Pancreas (tissue), 10 donors: ENCODE measurements at regions of chr7 and their contacts with region 1.

Region 1: GRCh38 chr7:145431834-145432233 is 596.0 kb upstream of the TPK1 start:
- DNase-seq: no peak
- ATAC-seq: no peak
- H3K4me3 ChIP-seq: no peak overlapping the region
- H3K27ac ChIP-seq: no peak overlapping the region
- H3K4me1 ChIP-seq: no peaks in the 10 kb centered on the region
- H3K27me3 ChIP-seq: no peaks in the 10 kb centered on the region
- CTCF ChIP-seq: no peak

Region 2: DNA sequence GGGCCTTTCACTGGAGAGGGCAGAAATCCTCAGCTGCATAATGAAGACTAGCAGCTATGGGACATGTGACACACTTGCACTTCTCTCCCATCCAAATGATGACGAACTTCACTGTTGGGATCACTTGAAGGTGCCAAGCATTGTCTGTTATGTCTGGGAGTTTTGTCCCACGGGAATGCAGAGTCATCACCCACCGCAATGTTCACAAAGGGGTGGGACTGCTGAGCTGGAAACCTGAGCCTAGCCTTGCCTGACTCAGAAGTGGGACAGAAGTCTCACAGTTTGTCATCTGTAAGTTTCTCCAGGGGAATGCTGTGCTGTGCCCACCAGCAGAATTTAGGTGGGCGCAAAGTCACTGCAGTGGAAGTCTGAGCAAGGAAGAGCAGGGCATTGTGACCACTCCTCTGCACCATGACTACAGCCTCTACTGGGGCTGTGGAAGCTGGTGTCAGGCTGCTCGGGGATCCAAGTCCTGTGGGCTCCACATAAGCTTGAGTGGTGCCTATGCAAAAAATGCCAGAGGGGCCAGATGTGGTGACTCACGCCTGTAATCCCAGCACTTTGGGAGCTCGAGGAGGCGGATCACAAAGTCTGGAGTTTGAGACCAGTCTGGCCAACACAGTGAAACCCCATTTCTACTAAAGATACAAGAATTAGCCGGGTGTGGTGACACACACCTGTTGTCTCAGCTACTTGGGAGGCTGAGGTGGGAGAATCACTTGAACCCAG is 212.8 kb after region 1 on chr7:
- intact Hi-C with region 1: loop called in 1 of 3 experiments (anchors 5 kb)
- DNase-seq: no peak
- ATAC-seq: no peak
- H3K4me3 ChIP-seq: no peak overlapping the region
- H3K27ac ChIP-seq: no peak overlapping the region
- H3K4me1 ChIP-seq: no peaks in the 10 kb centered on the region
- H3K27me3 ChIP-seq: no peaks in the 10 kb centered on the region
- CTCF ChIP-seq: no peak